Pancreas (tissue), 10 donors: ENCODE measurements at regions of chr12 and their contacts with region 1.

Region 1: DNA sequence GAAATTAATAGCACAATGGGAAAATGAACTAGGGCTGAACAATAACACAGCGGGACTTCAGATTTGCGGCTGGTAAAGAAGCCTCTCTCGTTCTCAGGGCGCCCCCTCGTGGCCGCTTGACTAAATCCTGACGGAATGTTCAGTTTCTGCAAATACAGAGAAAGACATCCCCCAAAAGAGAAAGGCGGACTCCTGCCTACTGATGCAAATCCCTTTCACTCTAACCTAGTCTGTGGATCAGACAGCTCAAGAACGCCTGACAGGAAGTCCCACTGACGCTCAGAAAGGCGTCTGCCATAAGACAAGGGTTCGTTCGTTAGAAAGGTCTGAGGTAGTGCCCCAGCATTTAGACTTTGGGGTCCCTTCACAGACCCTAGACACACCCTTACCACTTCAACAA is 2.5 kb downstream of the NUAK1 start:
- DNase-seq: peak; percentile 61 to 98 (median 85)
- ATAC-seq: peak in 3 of 4 donors; percentile 22 to 49 (median 44)
- H3K4me3 ChIP-seq: peak overlapping the region in 1 of 4 donors; percentile 17
- H3K27ac ChIP-seq: no peak overlapping the region
- H3K4me1 ChIP-seq: peaks cover 0 to 14% (median 4%) of the 10 kb centered on the region in 3 donors
- H3K27me3 ChIP-seq: no peaks in the 10 kb centered on the region
- CTCF ChIP-seq: peak; percentile 68 to 89 (median 76)

Region 2: DNA sequence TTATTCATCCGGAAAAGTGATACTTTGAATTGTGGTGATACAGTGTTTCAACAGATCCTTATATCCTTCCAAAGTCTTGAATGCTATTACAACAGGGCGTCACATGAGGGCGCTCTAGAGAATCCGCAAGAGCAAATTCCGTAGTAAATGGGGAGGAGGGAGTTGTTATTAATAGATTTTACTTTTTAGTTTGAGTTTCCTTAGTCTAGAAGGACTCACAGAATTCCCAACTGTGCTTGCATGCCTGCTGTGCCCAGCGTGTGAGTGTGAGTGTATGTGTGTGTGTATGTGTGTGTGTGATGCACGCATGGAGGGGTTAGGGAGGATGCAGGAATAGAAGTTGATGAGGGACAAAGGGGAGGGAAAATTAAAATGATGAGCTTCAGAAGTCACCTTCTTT is 430.5 kb before region 1 on chr12:
- intact Hi-C with region 1: loop called in 2 of 3 experiments (anchors 5 to 10 kb)
- DNase-seq: peak in 2 of 6 donors; percentile 6 to 40
- ATAC-seq: peak in 3 of 4 donors; percentile 67 to 79 (median 76)
- H3K4me3 ChIP-seq: no peak overlapping the region
- H3K27ac ChIP-seq: no peak overlapping the region
- H3K4me1 ChIP-seq: no peaks in the 10 kb centered on the region
- H3K27me3 ChIP-seq: no peaks in the 10 kb centered on the region
- CTCF ChIP-seq: peak; percentile 53 to 79 (median 63)

Region 3: GRCh38 chr12:106195621-106196027 is 59.4 kb after region 1 on chr12:
- intact Hi-C with region 1: no loop called
- DNase-seq: peak in 4 of 6 donors; percentile 30 to 67 (median 42)
- ATAC-seq: peak; percentile 48 to 90 (median 82)
- H3K4me3 ChIP-seq: no peak overlapping the region
- H3K27ac ChIP-seq: peak overlapping the region in 1 of 4 donors; percentile 34
- H3K4me1 ChIP-seq: peaks cover 6 to 10% (median 9%) of the 10 kb centered on the region in 3 donors
- H3K27me3 ChIP-seq: no peaks in the 10 kb centered on the region
- CTCF ChIP-seq: no peak